ENCODE measurements at regions of chr10 and their contacts with region 1.

Region 1: GRCh38 chr10:102476466-102477141 is 25.3 kb upstream of the C10orf95 start:
- DNase-seq: peak; percentile 43
- H3K4me3 Mint-ChIP-seq: no peak overlapping the region
- H3K27ac Mint-ChIP-seq: peak overlapping the region; percentile 14
- H3K4me1 Mint-ChIP-seq: peaks cover 29% of the 10 kb centered on the region
- H3K27me3 Mint-ChIP-seq: no peaks in the 10 kb centered on the region

Region 2: DNA sequence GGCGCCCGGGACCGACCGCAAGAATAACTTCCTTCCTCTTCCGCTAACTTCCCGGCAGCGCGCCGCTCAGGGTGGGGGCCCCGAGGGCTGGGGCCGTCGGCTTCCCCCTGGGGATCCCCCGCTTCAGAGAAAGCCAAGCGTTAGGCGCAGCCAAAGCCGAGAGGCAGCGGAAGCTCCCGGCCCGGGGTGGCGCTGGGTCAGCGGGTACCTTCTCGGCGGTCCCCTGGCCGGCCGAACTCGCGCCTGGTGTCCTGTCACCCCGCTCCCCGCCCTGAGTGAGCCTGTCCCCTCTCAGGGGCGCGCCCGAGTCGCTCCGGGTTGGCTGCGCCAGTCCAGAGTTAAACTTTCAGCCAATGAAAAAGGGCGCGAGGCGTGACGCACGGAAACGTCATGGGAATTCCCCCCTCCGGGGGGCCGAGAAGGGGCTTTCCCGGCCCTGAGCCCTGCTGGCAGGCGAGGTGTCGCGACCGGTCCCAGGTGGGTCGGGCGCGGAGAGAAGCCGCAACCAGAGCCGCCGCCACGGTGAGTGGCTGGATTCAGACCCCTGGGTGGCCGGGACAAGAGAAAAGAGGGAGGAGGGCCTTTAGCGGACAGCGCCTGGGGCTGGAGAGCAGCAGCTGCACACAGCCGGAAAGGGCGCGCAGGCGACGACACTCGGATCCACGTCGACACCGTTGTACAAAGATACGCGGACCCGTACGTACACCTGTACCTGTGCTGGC is 82.4 kb before region 1 on chr10:
- CTCF ChIA-PET with region 1: interaction called, 25 read pairs
- DNase-seq: peak; percentile 99
- H3K4me3 Mint-ChIP-seq: peak overlapping the region; percentile 79
- H3K27ac Mint-ChIP-seq: peak overlapping the region; percentile 96
- H3K4me1 Mint-ChIP-seq: peaks cover 42% of the 10 kb centered on the region
- H3K27me3 Mint-ChIP-seq: peaks cover 10% of the 10 kb centered on the region

Region 3: GRCh38 chr10:102399217-102400089 is 77.2 kb before region 1 on chr10:
- CTCF ChIA-PET with region 1: interaction called, 25 read pairs
- DNase-seq: peak; percentile 90
- H3K4me3 Mint-ChIP-seq: peak overlapping the region; percentile 62
- H3K27ac Mint-ChIP-seq: peak overlapping the region; percentile 70
- H3K4me1 Mint-ChIP-seq: peaks cover 40% of the 10 kb centered on the region
- H3K27me3 Mint-ChIP-seq: no peaks in the 10 kb centered on the region

Region 4: GRCh38 chr10:102420810-102421644 is 55.6 kb before region 1 on chr10 and contains the start of gene FBXL15:
- CTCF ChIA-PET with region 1: interaction called, 28 read pairs
- DNase-seq: peak; percentile 97
- H3K4me3 Mint-ChIP-seq: peak within 1 kb of the TSS; percentile 96
- H3K27ac Mint-ChIP-seq: peak within 1 kb of the TSS; percentile 96
- H3K4me1 Mint-ChIP-seq: peaks cover 40% of the 10 kb centered on the region
- H3K27me3 Mint-ChIP-seq: peaks cover 48% of the 10 kb centered on the region

Region 5: DNA sequence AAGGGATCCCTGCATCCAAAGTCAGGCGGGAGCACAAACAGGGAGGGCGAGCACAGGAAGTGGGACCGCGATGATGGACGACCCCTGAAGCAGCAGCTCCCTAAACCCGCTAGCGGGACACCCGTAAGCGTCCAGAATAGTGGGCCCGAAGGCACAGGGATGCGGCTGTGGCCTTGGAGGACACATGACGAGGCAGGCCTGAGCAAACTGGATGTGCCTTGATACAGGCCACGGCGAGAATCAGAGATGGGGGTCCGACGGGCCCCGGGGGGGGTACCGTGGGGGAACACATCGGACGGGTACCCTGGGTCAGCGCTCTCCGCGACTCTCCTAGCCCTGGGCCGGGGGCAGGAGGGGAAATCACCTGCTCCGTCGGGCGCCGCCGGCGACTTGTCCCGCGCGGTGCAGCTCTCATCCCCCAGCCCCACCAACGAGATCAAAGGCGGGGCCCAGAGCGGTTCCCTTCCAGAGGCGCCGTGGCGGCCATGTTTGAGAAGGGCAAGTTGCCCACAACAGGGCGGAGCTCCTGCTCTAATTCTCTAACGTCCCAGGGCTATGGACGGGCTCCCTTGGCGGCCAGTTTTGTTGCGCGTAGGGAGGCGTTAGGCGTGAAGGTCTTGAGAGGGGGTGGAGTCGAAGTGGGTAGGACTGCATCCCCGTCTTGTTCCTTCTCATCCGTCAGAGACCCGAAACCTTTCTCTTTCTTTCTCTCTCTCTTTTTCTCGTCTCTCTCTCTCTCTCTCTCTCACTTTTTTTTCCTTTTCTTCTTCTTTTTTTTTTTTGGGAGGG is 44.2 kb before region 1 on chr10 and contains the start of gene CUEDC2:
- CTCF ChIA-PET with region 1: interaction called, 10 read pairs
- DNase-seq: peak; percentile 98
- H3K4me3 Mint-ChIP-seq: peak within 1 kb of the TSS; percentile 92
- H3K27ac Mint-ChIP-seq: peak within 1 kb of the TSS; percentile 93
- H3K4me1 Mint-ChIP-seq: peaks cover 56% of the 10 kb centered on the region
- H3K27me3 Mint-ChIP-seq: peaks cover 4% of the 10 kb centered on the region

Region 6: DNA sequence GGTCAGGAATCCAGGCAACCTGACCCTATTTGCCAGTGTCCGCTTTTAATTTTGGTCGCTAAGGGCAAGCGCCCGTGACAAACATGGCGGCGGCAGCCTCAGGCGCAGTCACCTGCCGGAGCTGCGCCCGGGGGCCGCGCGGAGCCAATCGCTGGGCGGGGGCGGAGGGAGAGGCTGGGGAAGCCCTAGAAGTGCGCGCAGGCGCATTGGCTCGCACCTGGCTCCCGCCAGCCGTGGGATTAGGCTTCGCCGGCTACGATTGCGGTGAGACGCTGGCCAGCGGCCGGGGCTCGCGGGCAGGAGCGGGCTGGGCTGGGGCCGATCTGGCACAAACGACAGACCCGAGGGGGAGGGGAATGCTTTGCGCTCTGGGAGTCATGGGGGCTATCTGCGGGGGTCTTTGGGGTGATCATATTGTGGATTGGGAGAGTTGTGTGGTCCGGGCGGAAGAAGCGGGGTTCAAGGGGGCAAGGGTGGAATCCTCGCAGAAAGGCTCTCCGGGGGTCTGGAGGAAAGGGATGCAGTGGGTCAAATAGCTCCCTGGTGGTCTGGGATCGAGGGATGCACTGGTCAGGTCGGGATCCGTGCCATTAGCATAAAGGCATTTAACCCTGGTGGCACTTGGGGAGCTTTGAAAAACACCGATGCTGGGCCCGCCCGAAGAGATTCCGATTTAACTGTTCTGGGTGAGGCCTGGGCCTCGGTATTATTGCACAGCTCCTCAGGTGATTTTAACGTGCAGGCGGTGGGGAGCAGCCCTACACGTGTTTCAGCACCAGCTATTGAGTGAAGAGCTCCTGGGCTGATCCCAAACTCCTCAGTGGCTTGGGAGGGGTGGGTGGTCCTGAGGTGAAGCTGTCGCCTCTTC is 15.2 kb before region 1 on chr10:
- CTCF ChIA-PET with region 1: interaction called, 16 read pairs
- DNase-seq: peak; percentile 96
- H3K4me3 Mint-ChIP-seq: peak overlapping the region; percentile 80
- H3K27ac Mint-ChIP-seq: peak overlapping the region; percentile 46
- H3K4me1 Mint-ChIP-seq: peaks cover 32% of the 10 kb centered on the region
- H3K27me3 Mint-ChIP-seq: peaks cover 17% of the 10 kb centered on the region

Region 7: GRCh38 chr10:102583435-102584417 is 107.1 kb after region 1 on chr10:
- CTCF ChIA-PET with region 1: interaction called, 26 read pairs
- DNase-seq: peak; percentile 90
- H3K4me3 Mint-ChIP-seq: no peak overlapping the region
- H3K27ac Mint-ChIP-seq: no peak overlapping the region
- H3K4me1 Mint-ChIP-seq: peaks cover 12% of the 10 kb centered on the region
- H3K27me3 Mint-ChIP-seq: no peaks in the 10 kb centered on the region